ENCODE measurements at regions of chr3 and their contacts with region 1.

Region 1: DNA sequence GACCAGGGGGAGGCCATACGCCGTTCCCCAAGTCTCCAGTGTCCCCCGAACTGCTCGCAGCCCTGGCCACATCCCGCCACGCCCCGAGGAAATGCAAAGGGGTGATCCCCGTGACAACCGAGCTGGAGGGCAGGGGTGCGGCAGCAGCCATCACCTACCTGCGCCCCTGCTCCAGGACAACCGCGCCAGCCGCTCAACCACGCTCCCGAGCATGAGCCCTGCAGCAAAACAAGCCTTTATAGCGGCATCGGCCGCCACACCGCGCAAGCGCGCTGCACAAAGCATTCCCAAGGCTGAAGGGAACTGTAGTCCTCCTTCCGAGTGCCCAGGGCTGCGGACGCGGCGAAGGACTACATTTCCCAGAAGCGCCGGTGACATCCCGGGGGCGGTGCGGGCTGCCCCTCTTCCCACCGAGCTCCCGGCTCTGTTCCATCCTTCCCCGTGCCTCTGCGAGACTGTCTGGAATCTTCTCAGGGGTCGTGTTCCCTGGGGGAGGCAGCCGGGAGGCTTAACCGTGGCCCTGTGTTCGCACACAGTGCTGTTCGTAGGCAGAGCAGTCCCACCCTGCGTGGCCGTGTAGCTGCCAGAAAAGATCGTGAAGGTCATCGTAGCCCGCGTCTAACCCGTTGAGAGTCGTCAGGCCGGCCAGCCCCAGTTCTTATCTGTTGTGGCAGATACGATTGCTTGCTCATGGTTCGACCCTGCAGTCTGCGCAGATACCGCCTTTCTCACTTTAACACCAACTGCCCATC is at the start of gene ABCC5:
- DNase-seq: peak; percentile 91 to 99 (median 97)

Region 2: DNA sequence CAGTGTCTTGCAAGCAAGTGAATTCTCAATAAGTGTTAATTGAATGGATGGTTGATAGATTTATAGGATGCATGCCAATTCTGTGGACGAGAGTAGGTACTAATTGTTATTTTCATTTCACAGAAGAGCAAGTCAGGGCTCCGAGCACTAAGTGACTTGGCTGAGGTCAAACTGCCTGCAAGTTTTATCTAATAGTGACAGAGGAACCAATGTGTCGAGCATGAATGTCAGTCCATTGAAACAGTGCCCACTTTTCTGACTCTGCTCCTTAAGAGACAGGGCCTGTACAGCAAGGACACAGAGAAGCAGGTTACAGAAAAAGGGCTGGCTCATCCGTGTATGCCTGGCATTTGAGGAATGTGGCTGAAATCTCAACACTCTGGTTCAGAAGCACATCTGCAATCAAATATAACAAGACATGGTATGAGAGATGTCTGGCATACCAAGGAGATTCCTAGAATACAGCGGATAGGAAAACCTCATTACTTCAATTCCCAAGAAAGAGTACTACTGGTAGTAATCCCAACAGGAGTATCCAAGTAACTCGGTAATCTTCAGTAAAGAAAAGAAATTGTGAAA is 770.7 kb before region 1 on chr3:
- intact Hi-C with region 1: no loop called
- DNase-seq: peak in 1 of 42 donors; percentile 12

Region 3: GRCh38 chr3:183775781-183776180 is 242.1 kb before region 1 on chr3:
- intact Hi-C with region 1: no loop called
- DNase-seq: peak in 37 of 42 donors; percentile 21 to 81 (median 58)

Region 4: DNA sequence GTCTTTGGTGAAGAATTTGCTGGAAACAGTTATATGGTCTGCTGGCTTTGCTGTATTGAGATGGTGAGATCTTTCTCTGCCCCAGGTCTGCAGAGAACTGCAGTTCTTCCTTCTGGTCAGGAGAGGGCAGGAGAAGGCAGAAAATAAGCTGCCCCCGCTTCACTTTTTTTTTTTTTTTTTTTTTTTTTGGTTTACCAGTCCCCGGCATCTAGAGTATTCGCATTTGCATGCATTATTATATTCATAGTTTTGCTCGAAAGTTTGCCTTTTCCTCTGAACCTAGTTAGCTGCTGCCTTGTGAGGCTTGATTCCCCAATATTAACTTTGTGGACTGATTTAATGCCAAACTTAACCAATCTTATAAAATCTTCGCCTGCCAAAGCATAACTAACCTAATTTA is 122.6 kb before region 1 on chr3:
- intact Hi-C with region 1: loop called (anchors 5 kb)
- DNase-seq: peak in 23 of 42 donors; percentile 9 to 68 (median 40)

Region 5: GRCh38 chr3:183959214-183959613 is 58.6 kb before region 1 on chr3:
- intact Hi-C with region 1: no loop called
- DNase-seq: peak in 9 of 42 donors; percentile 3 to 44 (median 16)

Region 6: DNA sequence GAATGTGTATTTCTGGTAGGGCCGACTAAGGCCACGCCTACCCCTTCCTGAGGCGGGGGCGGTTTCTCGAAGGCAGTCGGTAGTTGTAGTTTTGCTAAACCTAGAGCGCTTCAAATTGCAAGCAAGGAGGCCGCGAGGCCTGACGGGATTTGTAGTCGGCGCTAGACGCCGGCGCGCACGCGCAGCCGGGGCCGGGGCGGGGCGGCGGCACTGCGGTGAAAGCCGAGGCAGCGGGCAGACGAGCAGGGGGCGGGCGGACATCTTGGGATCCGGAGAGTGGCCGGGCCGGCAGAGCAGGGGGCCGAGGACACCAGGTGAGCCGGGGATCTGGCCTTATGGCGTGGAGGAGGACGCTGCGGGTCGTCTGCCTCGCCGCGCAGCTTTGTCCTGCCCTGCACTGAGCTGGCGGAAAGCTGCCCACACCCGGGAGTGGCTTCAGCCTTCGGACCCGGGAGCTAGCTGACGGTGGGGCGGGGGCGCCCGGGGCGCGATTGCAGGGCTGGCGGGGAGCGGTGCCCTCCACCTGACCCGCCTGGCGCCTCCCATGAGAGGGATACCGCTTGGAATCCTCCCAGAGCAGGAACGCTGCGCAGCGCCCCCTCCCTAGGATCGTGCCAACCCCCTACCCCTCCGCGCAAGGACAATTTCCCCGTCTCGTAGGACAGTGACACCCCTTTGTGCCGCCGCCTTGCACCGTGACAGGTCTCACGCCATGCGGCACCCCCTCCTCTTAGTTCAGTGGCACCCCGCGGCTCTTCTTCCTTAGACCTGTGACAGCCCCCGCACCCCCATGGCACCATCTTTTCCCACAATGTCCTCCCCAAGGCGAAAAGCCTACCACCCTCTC is 157.0 kb after region 1 on chr3 and contains the start of gene AP2M1:
- intact Hi-C with region 1: no loop called
- DNase-seq: peak; percentile 97 to 100 (median 99)